Activated CD4-positive, alpha-beta T cell treated with anti-CD3 and anti-CD28 coated beads, Interleukin-2, amount 10 ng/mL, durations not matched to agents 24 days and 14 days (primary cell): ENCODE measurements at regions of chr17 and their contacts with region 1.

Region 1: DNA sequence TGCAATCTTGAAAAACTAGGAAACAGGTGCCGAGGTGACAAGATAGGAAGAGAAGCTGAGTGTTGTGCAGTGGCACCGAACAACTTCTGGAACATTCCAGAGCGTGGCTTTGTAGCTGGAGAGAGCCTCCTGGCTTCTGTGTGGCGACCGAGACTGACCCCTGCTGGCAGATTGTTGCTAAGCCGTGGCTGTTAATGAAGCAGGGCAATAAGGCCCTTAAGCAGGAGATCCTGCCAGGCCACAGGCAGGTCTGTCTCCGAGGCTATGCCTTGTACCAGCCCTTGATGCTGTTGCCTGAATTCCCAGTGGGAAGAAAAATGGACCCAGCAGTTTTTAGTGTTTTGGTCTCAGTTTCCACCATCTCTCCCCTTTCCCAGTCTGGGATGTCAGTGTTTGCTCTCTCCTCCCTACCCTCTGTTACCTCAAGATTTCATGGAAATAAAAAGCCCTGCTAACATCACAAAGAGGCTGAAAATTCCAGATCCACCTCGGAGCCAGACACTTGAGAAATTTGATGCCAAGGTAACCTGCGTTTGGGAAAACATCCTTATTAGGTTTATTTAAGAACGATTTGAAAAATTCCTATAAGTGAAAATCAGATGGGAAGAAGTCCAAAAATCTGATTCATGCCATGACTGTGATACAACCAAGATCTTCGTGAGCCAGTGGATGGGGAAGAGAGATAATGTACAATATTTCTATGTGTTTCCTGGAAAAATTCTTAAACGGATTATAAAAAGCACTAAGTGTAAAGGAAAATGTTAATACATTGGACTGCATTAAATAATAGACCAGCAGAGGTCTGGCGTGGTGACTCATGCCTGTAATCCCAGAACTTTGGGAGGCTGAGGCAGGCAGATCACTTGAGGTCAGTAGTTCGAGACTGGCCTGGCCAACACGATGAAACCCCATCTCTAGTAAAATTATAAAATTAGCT is 265.1 kb downstream of the PRKCA start:
- DNase-seq: peak; percentile 93
- H3K4me3 Mint-ChIP-seq: no peak overlapping the region
- H3K27ac Mint-ChIP-seq: peak overlapping the region; percentile 14
- H3K4me1 Mint-ChIP-seq: peaks cover 34% of the 10 kb centered on the region
- H3K27me3 Mint-ChIP-seq: no peaks in the 10 kb centered on the region

Region 2: GRCh38 chr17:66200685-66201092 is 366.8 kb before region 1 on chr17:
- intact Hi-C with region 1: loop called (anchors 5 kb)
- DNase-seq: peak; percentile 80
- H3K4me3 Mint-ChIP-seq: no peak overlapping the region
- H3K27ac Mint-ChIP-seq: peak overlapping the region; percentile 43
- H3K4me1 Mint-ChIP-seq: peaks cover 9% of the 10 kb centered on the region
- H3K27me3 Mint-ChIP-seq: no peaks in the 10 kb centered on the region